ENCODE measurements at regions of chr12 and their contacts with region 1.

Region 1: GRCh38 chr12:55659486-55660385 is 23.0 kb downstream of the OR10P1 start:
- DNase-seq: no peak
- H3K4me3 Mint-ChIP-seq: no peak overlapping the region
- H3K27ac Mint-ChIP-seq: no peak overlapping the region
- H3K4me1 Mint-ChIP-seq: no peaks in the 10 kb centered on the region
- H3K27me3 Mint-ChIP-seq: peaks cover 25% of the 10 kb centered on the region

Region 2: GRCh38 chr12:55188974-55189556 is 470.7 kb before region 1 on chr12:
- intact Hi-C with region 1: loop called (anchors 1 kb)
- DNase-seq: peak; percentile 33
- H3K4me3 Mint-ChIP-seq: no peak overlapping the region
- H3K27ac Mint-ChIP-seq: no peak overlapping the region
- H3K4me1 Mint-ChIP-seq: no peaks in the 10 kb centered on the region
- H3K27me3 Mint-ChIP-seq: peaks cover 11% of the 10 kb centered on the region

Region 3: GRCh38 chr12:55582066-55582465 is 77.7 kb before region 1 on chr12:
- intact Hi-C with region 1: no loop called
- DNase-seq: no peak
- H3K4me3 Mint-ChIP-seq: no peak overlapping the region
- H3K27ac Mint-ChIP-seq: no peak overlapping the region
- H3K4me1 Mint-ChIP-seq: no peaks in the 10 kb centered on the region
- H3K27me3 Mint-ChIP-seq: peaks cover 3% of the 10 kb centered on the region

Region 4: DNA sequence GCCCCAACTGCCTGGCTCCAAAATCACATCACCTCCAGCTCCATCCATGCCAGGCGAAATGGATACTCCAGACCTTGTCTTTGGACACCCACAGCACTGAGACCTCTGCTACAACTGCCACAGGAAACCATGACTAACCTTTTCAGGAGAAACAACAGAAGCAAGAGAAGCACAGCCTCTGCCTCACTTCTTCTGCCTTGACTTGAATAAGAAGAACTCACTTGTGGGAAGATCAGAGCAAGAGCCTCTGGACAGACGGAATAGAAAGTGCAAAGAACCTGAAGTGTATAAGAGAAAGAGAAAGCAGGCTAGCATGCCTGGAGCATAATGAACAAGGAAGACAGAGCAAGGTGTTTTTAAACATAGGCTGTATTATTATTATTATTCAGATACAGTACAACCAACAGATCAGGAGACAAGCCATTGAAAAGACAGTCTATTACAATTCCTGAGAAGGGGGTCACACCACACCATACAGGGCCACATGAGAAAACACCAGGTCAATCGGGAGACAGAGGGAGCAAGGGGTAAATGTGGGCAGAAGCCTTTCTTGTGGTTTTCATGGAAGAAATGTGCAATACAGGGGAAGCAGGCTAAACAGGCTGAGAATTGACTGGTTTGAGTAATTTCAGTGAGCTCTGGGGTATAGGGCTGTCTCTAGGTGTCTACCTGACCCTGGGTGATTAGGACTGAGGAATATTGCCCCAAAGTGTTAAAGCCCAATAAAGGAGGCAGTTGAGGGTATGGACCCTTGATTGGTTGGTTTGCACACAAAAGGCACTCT is 30.5 kb before region 1 on chr12:
- intact Hi-C with region 1: loop called (anchors 2 kb)
- DNase-seq: no peak
- H3K4me3 Mint-ChIP-seq: peak overlapping the region; percentile 0
- H3K27ac Mint-ChIP-seq: peak overlapping the region; percentile 54
- H3K4me1 Mint-ChIP-seq: peaks cover 23% of the 10 kb centered on the region
- H3K27me3 Mint-ChIP-seq: peaks cover 3% of the 10 kb centered on the region

Region 5: GRCh38 chr12:55642669-55643068 is 17.1 kb before region 1 on chr12:
- intact Hi-C with region 1: loop called (anchors 1 kb)
- DNase-seq: no peak
- H3K4me3 Mint-ChIP-seq: no peak overlapping the region
- H3K27ac Mint-ChIP-seq: no peak overlapping the region
- H3K4me1 Mint-ChIP-seq: peaks cover 32% of the 10 kb centered on the region
- H3K27me3 Mint-ChIP-seq: peaks cover under 1% of the 10 kb centered on the region